ENCODE measurements at regions of chr7 and their contacts with region 1.

Region 1: DNA sequence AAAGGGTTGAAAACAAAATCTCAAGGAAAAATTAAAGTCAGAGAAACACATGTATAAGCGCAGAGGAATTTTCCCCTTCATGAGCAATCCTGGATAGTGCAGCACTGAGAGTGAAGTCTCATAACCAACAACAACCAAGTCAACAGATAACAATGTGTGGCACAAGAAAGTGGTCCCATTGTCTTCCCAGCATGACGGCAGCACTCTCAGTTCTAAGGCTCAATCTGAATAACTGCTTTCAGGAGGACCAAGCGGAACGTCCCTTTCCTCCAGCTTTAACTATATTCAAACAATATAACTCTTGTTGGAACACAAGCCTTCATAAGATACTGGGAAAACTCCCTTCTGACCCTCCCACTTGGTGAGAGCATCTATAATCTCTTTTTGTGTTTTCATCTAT is 137.9 kb downstream of the RAPGEF5 start:
- DNase-seq: no peak
- ATAC-seq: peak; percentile 15 to 47 (median 43)
- H3K4me3 ChIP-seq: peak overlapping the region; percentile 18 to 71 (median 56)
- H3K27ac ChIP-seq: peak overlapping the region; percentile 61 to 89 (median 82)
- H3K4me1 ChIP-seq: peaks cover 0 to 49% (median 15%) of the 10 kb centered on the region in 12 donors
- H3K27me3 ChIP-seq: no peaks in the 10 kb centered on the region
- CTCF ChIP-seq: no peak
- POLR2A ChIP-seq: peak in 1 of 2 donors; percentile 23

Region 2: DNA sequence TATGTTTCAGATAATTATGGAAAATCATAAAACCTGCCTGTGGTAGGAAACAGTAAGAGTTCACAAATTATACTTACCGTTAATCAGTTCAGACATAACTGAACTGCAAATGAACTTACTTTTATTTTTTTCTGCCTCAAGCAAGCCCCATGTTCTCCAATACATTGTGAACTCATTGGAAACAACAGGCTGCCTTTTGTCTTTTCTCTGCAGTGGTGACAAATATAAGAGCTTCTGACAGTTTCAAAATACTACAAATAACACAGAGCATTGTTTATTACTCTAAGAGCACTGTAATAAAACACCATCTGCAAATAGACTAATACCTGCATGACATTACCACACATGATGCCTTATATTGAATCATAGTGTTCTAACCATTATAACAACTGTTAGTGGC is 179.4 kb before region 1 on chr7:
- intact Hi-C with region 1: no loop called
- DNase-seq: no peak
- ATAC-seq: no peak
- H3K4me3 ChIP-seq: no peak overlapping the region
- H3K27ac ChIP-seq: no peak overlapping the region
- H3K4me1 ChIP-seq: no peaks in the 10 kb centered on the region
- H3K27me3 ChIP-seq: peaks cover 0 to 5% (median 0%) of the 10 kb centered on the region in 9 donors
- CTCF ChIP-seq: no peak
- POLR2A ChIP-seq: no peak

Region 3: DNA sequence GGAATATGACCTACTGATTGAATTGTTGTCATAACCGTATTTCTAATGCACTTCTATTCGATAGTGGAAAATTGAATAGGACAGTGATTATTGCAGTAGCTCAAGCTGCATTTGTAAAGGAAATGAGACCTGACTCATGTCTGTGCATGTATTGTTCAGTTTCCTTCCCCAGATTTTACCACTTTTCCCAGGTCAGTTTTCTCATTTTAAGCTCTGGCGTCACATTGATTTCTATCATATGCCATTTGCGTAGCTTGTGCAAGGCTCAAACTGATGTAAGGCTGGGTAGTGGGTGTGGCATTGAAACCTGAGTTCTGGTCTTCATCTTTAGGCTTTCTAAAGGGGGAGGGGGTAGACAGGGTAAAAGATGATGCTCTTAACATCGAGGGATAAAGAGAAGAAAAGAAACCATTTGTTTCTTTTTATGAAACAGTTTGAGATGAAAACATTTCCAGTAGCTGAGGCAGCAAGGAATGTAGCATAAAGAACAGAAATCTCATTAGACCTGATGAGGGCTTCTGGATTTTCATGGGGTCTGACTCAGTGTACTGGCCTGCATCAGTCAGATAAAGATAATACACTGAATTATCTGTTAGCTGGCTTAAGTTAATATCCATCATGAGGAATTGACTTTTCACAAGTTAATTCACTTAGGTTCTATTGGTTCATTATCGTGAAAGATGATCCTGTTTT is 91.1 kb before region 1 on chr7:
- intact Hi-C with region 1: loop called in 1 of 10 experiments (anchors 5 kb)
- DNase-seq: no peak
- ATAC-seq: peak in 2 of 4 donors; percentile 47 to 71
- H3K4me3 ChIP-seq: no peak overlapping the region
- H3K27ac ChIP-seq: peak overlapping the region in 11 of 12 donors; percentile 6 to 80 (median 58)
- H3K4me1 ChIP-seq: peaks cover 0 to 35% (median 12%) of the 10 kb centered on the region in 12 donors
- H3K27me3 ChIP-seq: no peaks in the 10 kb centered on the region
- CTCF ChIP-seq: no peak
- POLR2A ChIP-seq: no peak